ENCODE measurements at regions of chr1 and their contacts with region 1.

Region 1: GRCh38 chr1:160675641-160676410 is 29.0 kb upstream of the SLAMF1 start:
- DNase-seq: peak; percentile 88
- ATAC-seq: peak; percentile 85
- H3K4me3 Mint-ChIP-seq: no peak overlapping the region
- H3K27ac Mint-ChIP-seq: peak overlapping the region; percentile 73
- H3K4me1 Mint-ChIP-seq: peaks cover 30% of the 10 kb centered on the region
- H3K27me3 Mint-ChIP-seq: no peaks in the 10 kb centered on the region
- CTCF ChIP-seq: peak; percentile 73

Region 2: GRCh38 chr1:160428655-160429054 is 247.2 kb before region 1 on chr1:
- CTCF ChIA-PET with region 1: interaction called, 10 read pairs
- POLR2A ChIA-PET with region 1: no interaction called
- intact Hi-C with region 1: no loop called
- DNase-seq: peak; percentile 42
- ATAC-seq: peak; percentile 53
- H3K4me3 Mint-ChIP-seq: peak overlapping the region; percentile 54
- H3K27ac Mint-ChIP-seq: peak overlapping the region; percentile 85
- H3K4me1 Mint-ChIP-seq: peaks cover 61% of the 10 kb centered on the region
- H3K27me3 Mint-ChIP-seq: no peaks in the 10 kb centered on the region
- CTCF ChIP-seq: peak; percentile 74

Region 3: DNA sequence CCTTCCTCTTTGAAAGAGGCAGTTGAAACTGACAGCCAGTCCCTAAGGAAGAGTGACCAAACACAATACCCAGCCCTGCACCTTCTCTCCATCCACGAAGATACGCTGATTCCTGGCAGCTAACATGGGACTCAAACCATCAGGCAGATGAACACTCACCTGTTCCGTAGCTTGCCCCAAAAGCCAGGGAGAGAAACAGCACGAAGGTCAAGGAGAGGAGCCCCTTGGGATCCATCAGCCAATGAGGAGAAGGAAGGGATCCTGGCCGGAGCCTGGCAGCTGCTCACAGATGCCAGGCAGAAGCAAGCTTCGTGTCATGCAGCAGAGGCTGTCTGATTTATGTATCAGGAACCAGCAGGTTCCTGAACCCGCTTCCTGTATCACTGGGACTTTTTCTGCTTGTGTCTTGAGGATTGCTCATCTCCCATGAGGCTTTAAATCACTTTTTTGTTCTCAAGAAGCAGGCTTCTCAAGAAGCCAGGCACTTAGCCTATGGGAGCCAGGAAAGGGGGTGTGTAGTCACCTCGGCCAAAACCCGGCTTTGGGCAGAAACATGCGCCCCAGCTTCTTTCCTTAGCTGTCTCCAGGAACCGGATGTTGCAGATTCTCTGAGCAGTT is 29.0 kb before region 1 on chr1 and contains the start of gene SLAMF1:
- CTCF ChIA-PET with region 1: interaction called, 15 read pairs
- POLR2A ChIA-PET with region 1: interaction called, 6 read pairs
- intact Hi-C with region 1: no loop called
- DNase-seq: peak; percentile 70
- ATAC-seq: peak; percentile 74
- H3K4me3 Mint-ChIP-seq: peak within 1 kb of the TSS; percentile 97
- H3K27ac Mint-ChIP-seq: peak within 1 kb of the TSS; percentile 99
- H3K4me1 Mint-ChIP-seq: peaks cover 49% of the 10 kb centered on the region
- H3K27me3 Mint-ChIP-seq: no peaks in the 10 kb centered on the region
- CTCF ChIP-seq: no peak
- total RNA-seq, gene SLAMF1: 65.9 to 67.8 TPM

Region 4: GRCh38 chr1:160664573-160665051 is 11.2 kb before region 1 on chr1:
- CTCF ChIA-PET with region 1: interaction called, 22 read pairs
- POLR2A ChIA-PET with region 1: interaction called, 5 read pairs
- intact Hi-C with region 1: no loop called
- DNase-seq: peak; percentile 56
- ATAC-seq: peak; percentile 81
- H3K4me3 Mint-ChIP-seq: peak overlapping the region; percentile 28
- H3K27ac Mint-ChIP-seq: peak overlapping the region; percentile 86
- H3K4me1 Mint-ChIP-seq: peaks cover 55% of the 10 kb centered on the region
- H3K27me3 Mint-ChIP-seq: no peaks in the 10 kb centered on the region
- CTCF ChIP-seq: no peak

Region 5: DNA sequence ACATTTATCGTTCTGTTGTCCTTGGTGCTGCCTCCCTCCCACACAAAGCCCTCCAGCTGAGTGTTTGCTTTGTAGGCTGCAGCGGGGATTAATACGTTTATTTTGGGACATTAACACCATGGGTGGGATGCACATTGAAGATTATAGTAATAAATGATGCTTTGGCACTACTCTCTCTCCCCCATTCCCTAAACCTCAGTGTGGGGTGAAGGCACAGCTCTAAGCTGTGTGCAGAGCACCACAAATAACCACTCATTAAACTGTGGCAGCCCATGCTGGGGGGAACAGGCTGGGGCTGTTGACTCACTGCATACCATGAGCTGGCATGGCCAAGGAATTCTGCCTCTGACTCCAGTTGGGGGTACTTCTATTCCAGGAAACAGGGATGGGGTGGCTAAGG is 590.4 kb after region 1 on chr1:
- CTCF ChIA-PET with region 1: no interaction called
- POLR2A ChIA-PET with region 1: no interaction called
- intact Hi-C with region 1: no loop called
- DNase-seq: no peak
- ATAC-seq: no peak
- H3K4me3 Mint-ChIP-seq: no peak overlapping the region
- H3K27ac Mint-ChIP-seq: no peak overlapping the region
- H3K4me1 Mint-ChIP-seq: no peaks in the 10 kb centered on the region
- H3K27me3 Mint-ChIP-seq: peaks cover 15% of the 10 kb centered on the region
- CTCF ChIP-seq: no peak

Measured in activated CD8-positive, alpha-beta T cell treated with anti-CD3 and anti-CD28 coated beads for 36 hours (primary cell).